Activated B cell treated with CpG ODN at 0.5 μM for 24 hours (primary cell): ENCODE measurements at regions of chr3 and their contacts with region 1.

Region 1: GRCh38 chr3:123328851-123329635 is 119.8 kb downstream of the ADCY5 start:
- DNase-seq: peak; percentile 69
- ATAC-seq: peak; percentile 79
- H3K4me3 Mint-ChIP-seq: no peak overlapping the region
- H3K27ac Mint-ChIP-seq: no peak overlapping the region
- H3K4me1 Mint-ChIP-seq: no peaks in the 10 kb centered on the region
- H3K27me3 Mint-ChIP-seq: peaks cover 2% of the 10 kb centered on the region
- CTCF ChIP-seq: no peak

Region 2: GRCh38 chr3:123723522-123724168 is 394.6 kb after region 1 on chr3:
- CTCF ChIA-PET with region 1: no interaction called
- POLR2A ChIA-PET with region 1: no interaction called
- intact Hi-C with region 1: loop called (anchors 2 kb)
- DNase-seq: no peak
- ATAC-seq: peak; percentile 65
- H3K4me3 Mint-ChIP-seq: no peak overlapping the region
- H3K27ac Mint-ChIP-seq: no peak overlapping the region
- H3K4me1 Mint-ChIP-seq: no peaks in the 10 kb centered on the region
- H3K27me3 Mint-ChIP-seq: peaks cover 4% of the 10 kb centered on the region
- CTCF ChIP-seq: peak; percentile 39